K562 (cell line): ENCODE measurements at regions of chr13 and their contacts with region 1.

Region 1: GRCh38 chr13:40777166-40777808 is 6.3 kb upstream of the MRPS31 start:
- DNase-seq: peak; percentile 26 to 70 (median 47)
- ATAC-seq: peak; percentile 91
- H3K4me3 ChIP-seq: peak overlapping the region; percentile 28
- H3K27ac ChIP-seq: peak overlapping the region; percentile 39; the same call in 2 of the 3 replicates
- H3K4me1 ChIP-seq: peaks cover 4 to 8% of the 10 kb centered on the region in 2 experiments; a peak in 3 of 5 replicates
- H3K27me3 ChIP-seq: no peaks in the 10 kb centered on the region
- CTCF ChIP-seq: peak; percentile 56 to 84 (median 57); a peak in 5 of 6 replicates
- EP300 ChIP-seq: no peak
- POLR2A ChIP-seq: no peak
- RAD21 ChIP-seq: peak in 1 of 2 experiments; percentile 31; a peak in 2 of 4 replicates

Region 2: GRCh38 chr13:40069173-40070044 is 707.9 kb before region 1 on chr13:
- CTCF ChIA-PET with region 1: no interaction called
- POLR2A ChIA-PET with region 1: no interaction called
- in situ Hi-C with region 1: no loop called
- intact Hi-C with region 1: loop called (anchors 2 kb)
- DNase-seq: peak; percentile 29 to 51 (median 38)
- ATAC-seq: peak; percentile 93
- H3K4me3 ChIP-seq: no peak overlapping the region
- H3K27ac ChIP-seq: no peak overlapping the region
- H3K4me1 ChIP-seq: no peaks in the 10 kb centered on the region
- H3K27me3 ChIP-seq: no peaks in the 10 kb centered on the region; a peak in 2 of 5 replicates
- CTCF ChIP-seq: peak; percentile 57 to 63 (median 63); a peak in 5 of 6 replicates
- EP300 ChIP-seq: no peak
- POLR2A ChIP-seq: no peak
- RAD21 ChIP-seq: peak; percentile 50 to 59

Region 3: GRCh38 chr13:40666045-40666904 is 111.0 kb before region 1 on chr13 and contains the start of gene FOXO1:
- CTCF ChIA-PET with region 1: no interaction called
- POLR2A ChIA-PET with region 1: no interaction called
- in situ Hi-C with region 1: no loop called
- intact Hi-C with region 1: loop called (anchors 5 kb)
- DNase-seq: peak; percentile 81 to 98 (median 96)
- ATAC-seq: peak; percentile 91
- H3K4me3 ChIP-seq: peak within 1 kb of the TSS; percentile 49
- H3K27ac ChIP-seq: no peak within 1 kb of the TSS
- H3K4me1 ChIP-seq: peaks cover 5 to 34% of the 10 kb centered on the region in 2 experiments; a peak in 3 of 5 replicates
- H3K27me3 ChIP-seq: peaks cover 0 to 12% of the 10 kb centered on the region in 2 experiments; a peak in 3 of 5 replicates
- CTCF ChIP-seq: no peak
- EP300 ChIP-seq: no peak
- POLR2A ChIP-seq: no peak
- RAD21 ChIP-seq: no peak
- polyA plus RNA-seq, gene FOXO1: 0.10 to 0.20 TPM

Region 4: DNA sequence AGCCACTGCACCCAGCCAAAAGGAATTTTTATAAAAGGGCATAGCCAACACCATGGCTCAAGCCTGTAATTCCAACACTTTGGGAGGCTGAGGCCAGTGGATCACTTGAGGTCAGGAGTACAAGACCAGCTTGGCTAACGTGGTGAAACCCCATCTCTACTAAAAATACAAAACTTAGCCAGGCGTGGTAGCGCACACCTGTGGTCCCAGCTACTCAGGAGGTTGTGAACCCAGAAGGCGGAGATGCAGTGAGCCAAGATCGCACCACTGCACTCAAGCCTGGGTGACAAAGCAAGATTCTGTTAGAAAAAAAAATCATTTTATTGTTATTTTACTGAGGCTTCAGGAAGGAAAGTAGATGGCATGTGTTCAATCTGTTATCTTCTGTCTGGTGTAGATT is 79.6 kb before region 1 on chr13:
- CTCF ChIA-PET with region 1: no interaction called
- POLR2A ChIA-PET with region 1: no interaction called
- in situ Hi-C with region 1: no loop called
- intact Hi-C with region 1: loop called (anchors 5 kb)
- DNase-seq: no peak
- ATAC-seq: no peak
- H3K4me3 ChIP-seq: no peak overlapping the region
- H3K27ac ChIP-seq: no peak overlapping the region
- H3K4me1 ChIP-seq: no peaks in the 10 kb centered on the region; a peak in 1 of 5 replicates
- H3K27me3 ChIP-seq: peaks cover 0 to 12% of the 10 kb centered on the region in 2 experiments; a peak in 1 of 5 replicates
- CTCF ChIP-seq: no peak
- EP300 ChIP-seq: no peak
- POLR2A ChIP-seq: no peak
- RAD21 ChIP-seq: no peak

Region 5: GRCh38 chr13:40732658-40733057 is 44.6 kb before region 1 on chr13:
- CTCF ChIA-PET with region 1: no interaction called
- POLR2A ChIA-PET with region 1: no interaction called
- in situ Hi-C with region 1: no loop called
- intact Hi-C with region 1: no loop called
- DNase-seq: no peak
- ATAC-seq: no peak
- H3K4me3 ChIP-seq: no peak overlapping the region
- H3K27ac ChIP-seq: no peak overlapping the region
- H3K4me1 ChIP-seq: no peaks in the 10 kb centered on the region
- H3K27me3 ChIP-seq: no peaks in the 10 kb centered on the region
- CTCF ChIP-seq: no peak
- EP300 ChIP-seq: no peak
- POLR2A ChIP-seq: no peak
- RAD21 ChIP-seq: no peak

Region 6: GRCh38 chr13:41658056-41658661 is 880.9 kb after region 1 on chr13:
- CTCF ChIA-PET with region 1: no interaction called
- POLR2A ChIA-PET with region 1: no interaction called
- in situ Hi-C with region 1: no loop called
- intact Hi-C with region 1: no loop called
- DNase-seq: peak in 1 of 4 experiments; percentile 3
- ATAC-seq: no peak
- H3K4me3 ChIP-seq: no peak overlapping the region
- H3K27ac ChIP-seq: no peak overlapping the region
- H3K4me1 ChIP-seq: no peaks in the 10 kb centered on the region
- H3K27me3 ChIP-seq: no peaks in the 10 kb centered on the region
- CTCF ChIP-seq: 0 out of 6 replicates have a peak, but pooled peaks of 1 of the 3 experiments have one; percentile 8
- EP300 ChIP-seq: no peak
- POLR2A ChIP-seq: no peak
- RAD21 ChIP-seq: no peak; a peak in 1 of 4 replicates